ENCODE measurements at regions of chr6 and their contacts with region 1.

Region 1: DNA sequence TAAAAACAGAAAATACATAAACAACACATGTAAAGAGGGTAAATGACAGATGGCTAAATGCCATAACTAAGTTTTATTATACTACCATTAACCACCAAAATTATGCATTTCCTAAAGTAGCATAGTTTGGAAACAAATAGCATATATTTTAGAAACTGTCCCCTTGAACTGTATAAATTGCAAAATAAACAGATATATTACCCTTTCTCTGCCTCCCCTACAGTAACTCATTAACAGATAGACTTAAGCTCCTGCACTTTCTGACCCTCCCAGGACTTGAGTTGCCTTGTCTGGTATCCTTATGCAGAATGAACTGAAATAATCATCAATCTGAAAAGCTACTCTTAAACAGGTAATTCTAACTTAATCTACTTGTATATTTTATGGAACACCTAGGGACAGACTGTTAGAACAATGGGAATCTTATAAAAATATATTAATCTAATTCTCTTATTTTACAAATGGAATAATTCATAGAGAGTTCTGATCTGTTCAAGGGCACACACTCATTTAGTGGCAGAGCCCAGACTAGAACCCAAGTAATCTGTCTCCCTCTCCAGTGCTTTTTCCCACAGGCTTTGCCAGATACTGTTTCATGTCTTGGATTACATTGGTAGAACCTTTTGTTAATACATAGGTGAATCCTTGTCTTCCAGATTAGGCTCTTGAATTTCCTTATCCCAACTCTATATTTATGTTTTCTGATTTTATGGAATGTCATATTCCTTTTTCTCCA is 50.6 kb upstream of the LOC128125822 start:
- DNase-seq: no peak
- H3K4me3 Mint-ChIP-seq: no peak overlapping the region
- H3K27ac Mint-ChIP-seq: no peak overlapping the region
- H3K4me1 Mint-ChIP-seq: peaks cover 35% of the 10 kb centered on the region
- H3K27me3 Mint-ChIP-seq: no peaks in the 10 kb centered on the region

Region 2: DNA sequence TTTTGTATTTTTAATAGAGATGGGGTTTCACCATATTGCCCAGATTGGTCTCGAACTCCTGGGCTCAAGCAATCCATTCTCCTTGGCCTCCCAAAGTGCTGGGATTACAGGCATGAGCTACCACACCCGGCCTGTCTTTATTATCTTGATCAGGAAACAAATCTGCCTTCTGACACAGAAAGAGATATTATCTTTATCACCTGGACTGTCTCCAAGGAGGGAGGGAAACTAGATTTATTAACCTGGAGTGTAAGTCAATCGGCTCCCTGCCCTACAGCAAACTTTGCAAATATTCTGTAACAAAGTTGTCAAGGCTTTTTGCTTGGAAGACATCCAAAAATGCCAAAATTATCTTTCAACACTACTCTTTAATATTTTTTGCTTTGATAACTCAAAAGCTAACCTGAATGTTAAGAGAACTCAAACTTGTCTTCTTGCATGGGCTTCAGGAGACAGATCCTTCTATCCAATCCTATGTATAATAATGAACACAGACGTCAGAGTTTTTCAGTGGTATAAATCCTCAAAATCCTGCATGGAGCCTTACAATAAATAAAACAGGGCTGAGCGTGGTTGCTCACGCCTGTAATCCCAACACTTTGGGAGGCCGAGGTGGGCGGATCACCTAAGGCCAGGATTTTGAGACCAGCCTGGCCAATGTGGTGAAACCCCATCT is 34.4 kb before region 1 on chr6:
- intact Hi-C with region 1: no loop called
- DNase-seq: no peak
- H3K4me3 Mint-ChIP-seq: no peak overlapping the region
- H3K27ac Mint-ChIP-seq: no peak overlapping the region
- H3K4me1 Mint-ChIP-seq: no peaks in the 10 kb centered on the region
- H3K27me3 Mint-ChIP-seq: peaks cover 7% of the 10 kb centered on the region

Region 3: GRCh38 chr6:63504777-63505384 is 16.8 kb before region 1 on chr6:
- intact Hi-C with region 1: loop called (anchors 2 kb)
- DNase-seq: no peak
- H3K4me3 Mint-ChIP-seq: no peak overlapping the region
- H3K27ac Mint-ChIP-seq: no peak overlapping the region
- H3K4me1 Mint-ChIP-seq: peaks cover 8% of the 10 kb centered on the region
- H3K27me3 Mint-ChIP-seq: peaks cover 14% of the 10 kb centered on the region

Region 4: GRCh38 chr6:63535193-63535592 is 13.6 kb after region 1 on chr6:
- intact Hi-C with region 1: no loop called
- DNase-seq: no peak
- H3K4me3 Mint-ChIP-seq: no peak overlapping the region
- H3K27ac Mint-ChIP-seq: no peak overlapping the region
- H3K4me1 Mint-ChIP-seq: peaks cover 14% of the 10 kb centered on the region
- H3K27me3 Mint-ChIP-seq: peaks cover 4% of the 10 kb centered on the region

Region 5: GRCh38 chr6:63560801-63561672 is 39.4 kb after region 1 on chr6:
- intact Hi-C with region 1: no loop called
- DNase-seq: no peak
- H3K4me3 Mint-ChIP-seq: no peak overlapping the region
- H3K27ac Mint-ChIP-seq: no peak overlapping the region
- H3K4me1 Mint-ChIP-seq: peaks cover 8% of the 10 kb centered on the region
- H3K27me3 Mint-ChIP-seq: peaks cover 4% of the 10 kb centered on the region

Region 6: DNA sequence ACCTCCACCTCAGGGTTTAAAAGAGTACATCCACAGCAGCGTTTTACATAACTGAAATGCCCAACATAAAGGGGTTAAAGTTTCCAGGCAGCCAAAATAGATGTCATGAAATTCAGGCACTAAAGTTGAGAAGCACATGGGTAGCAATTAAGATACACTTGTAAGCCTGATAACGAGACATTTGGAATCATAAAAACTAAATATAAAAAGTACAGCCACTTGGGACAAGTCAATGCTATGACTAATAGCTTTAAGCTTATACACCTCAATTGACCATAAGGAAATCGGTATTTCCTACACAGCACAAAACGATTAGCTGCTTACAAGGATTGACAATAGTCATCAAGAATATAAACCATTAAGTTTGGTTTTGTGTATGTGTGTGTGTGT is 62.5 kb after region 1 on chr6:
- intact Hi-C with region 1: no loop called
- DNase-seq: no peak
- H3K4me3 Mint-ChIP-seq: no peak overlapping the region
- H3K27ac Mint-ChIP-seq: no peak overlapping the region
- H3K4me1 Mint-ChIP-seq: peaks cover 16% of the 10 kb centered on the region
- H3K27me3 Mint-ChIP-seq: peaks cover 2% of the 10 kb centered on the region